ENCODE measurements at regions of chr19 and their contacts with region 1.

Region 1: DNA sequence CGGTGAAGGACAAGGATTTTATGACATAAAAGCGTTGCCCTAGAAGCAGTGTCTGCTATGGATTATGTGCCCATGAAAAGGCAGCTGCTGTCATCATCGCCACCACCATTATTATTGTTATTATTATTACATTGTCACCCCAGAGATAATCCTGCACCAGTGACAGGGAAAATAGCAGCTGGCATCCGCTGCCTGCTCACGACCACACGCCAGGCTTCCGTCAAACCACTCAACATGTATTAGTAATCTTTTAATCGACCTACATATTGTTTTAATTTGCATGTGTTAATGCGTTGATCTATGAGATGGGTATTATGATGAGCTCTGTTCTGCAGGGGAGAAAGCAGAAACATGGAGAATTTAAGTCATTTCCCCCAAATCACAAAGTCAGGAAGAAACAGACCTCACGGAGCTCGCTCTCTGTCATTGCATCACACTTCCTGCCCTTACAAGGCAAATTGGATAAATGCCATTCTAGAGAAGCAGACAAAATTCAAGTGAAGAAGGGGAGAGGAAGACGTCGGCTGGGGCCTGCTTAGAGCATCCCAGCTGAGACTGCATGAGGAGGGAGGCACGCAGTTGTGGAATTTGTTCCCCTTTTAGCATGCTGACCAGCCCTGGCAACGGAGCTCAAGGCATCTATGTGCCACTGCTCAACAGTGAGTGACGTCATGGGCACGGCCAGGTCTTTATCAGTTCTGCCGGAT is at the start of gene FFAR3:
- DNase-seq: peak in 3 of 5 donors; percentile 10 to 24 (median 22)
- H3K4me3 ChIP-seq: no peak within 1 kb of the TSS
- H3K4me3 Mint-ChIP-seq: peak within 1 kb of the TSS in 7 of 8 donors; percentile 19 to 70 (median 58)
- H3K27ac ChIP-seq: no peak within 1 kb of the TSS
- H3K27ac Mint-ChIP-seq: peak within 1 kb of the TSS in 5 of 7 donors; percentile 2 to 75 (median 36)
- H3K4me1 ChIP-seq: peaks cover 15% of the 10 kb centered on the region
- H3K4me1 Mint-ChIP-seq: peaks cover 5 to 9% (median 9%) of the 10 kb centered on the region in 4 donors
- H3K27me3 ChIP-seq: no peaks in the 10 kb centered on the region
- H3K27me3 Mint-ChIP-seq: peaks cover 3 to 9% of the 10 kb centered on the region in 2 donors
- total RNA-seq, gene FFAR3: not detected

Region 2: DNA sequence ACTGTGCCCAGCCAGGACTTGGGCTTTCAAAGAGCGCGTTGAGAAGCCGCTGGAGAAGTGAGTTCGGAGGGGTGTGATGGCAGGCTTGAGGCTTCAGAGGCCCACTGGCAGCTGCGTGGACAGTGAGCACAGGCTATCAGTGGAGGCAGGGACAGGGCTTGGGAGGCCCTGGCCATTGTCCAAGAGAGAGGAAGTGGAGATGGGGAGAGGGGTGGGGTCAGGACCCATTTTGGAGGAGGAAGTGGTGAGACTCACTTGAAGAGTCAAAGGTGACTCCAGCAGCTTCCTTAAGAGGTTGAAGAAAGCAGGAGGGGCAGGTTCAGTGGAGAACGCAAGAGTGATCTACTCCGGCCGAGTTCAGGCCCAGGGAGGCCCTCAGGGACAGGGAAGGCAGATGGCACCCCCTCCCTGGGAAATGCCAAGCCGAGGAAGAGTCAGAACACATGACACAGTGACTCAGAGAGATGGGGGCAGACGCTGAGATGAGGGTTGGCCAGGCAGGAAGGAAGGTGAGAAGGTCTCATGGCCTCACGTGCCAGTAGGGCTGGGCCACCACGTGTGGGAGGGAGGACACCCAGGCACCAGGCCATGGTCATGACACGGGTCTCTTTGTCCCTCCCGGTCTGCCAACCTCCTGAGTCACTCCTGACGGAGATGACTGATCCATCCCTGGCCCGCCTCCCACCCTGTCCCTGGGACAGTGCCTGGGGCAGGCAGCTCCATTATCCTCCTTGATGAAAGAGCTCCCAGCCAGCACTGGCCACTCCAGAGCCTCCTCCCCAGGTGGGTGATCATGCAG is 39.2 kb before region 1 on chr19:
- CTCF ChIA-PET with region 1: no interaction called
- POLR2A ChIA-PET with region 1: no interaction called
- intact Hi-C with region 1: no loop called
- DNase-seq: no peak
- H3K4me3 ChIP-seq: no peak overlapping the region
- H3K4me3 Mint-ChIP-seq: no peak overlapping the region
- H3K27ac ChIP-seq: no peak overlapping the region
- H3K27ac Mint-ChIP-seq: peak overlapping the region in 1 of 7 donors; percentile 32
- H3K4me1 ChIP-seq: peaks cover 6% of the 10 kb centered on the region
- H3K4me1 Mint-ChIP-seq: peaks cover 0 to 12% (median 6%) of the 10 kb centered on the region in 4 donors
- H3K27me3 ChIP-seq: no peaks in the 10 kb centered on the region
- H3K27me3 Mint-ChIP-seq: peaks cover 0 to 2% of the 10 kb centered on the region in 2 donors

Region 3: GRCh38 chr19:35468637-35469036 is 110.6 kb after region 1 on chr19:
- CTCF ChIA-PET with region 1: interaction called, 97 read pairs
- POLR2A ChIA-PET with region 1: interaction called, 20 read pairs
- intact Hi-C with region 1: no loop called
- DNase-seq: peak; percentile 64 to 73 (median 71)
- H3K4me3 ChIP-seq: no peak overlapping the region
- H3K4me3 Mint-ChIP-seq: no peak overlapping the region
- H3K27ac ChIP-seq: no peak overlapping the region
- H3K27ac Mint-ChIP-seq: peak overlapping the region in 1 of 7 donors; percentile 47
- H3K4me1 ChIP-seq: peaks cover 12% of the 10 kb centered on the region
- H3K4me1 Mint-ChIP-seq: peaks cover 7 to 17% (median 16%) of the 10 kb centered on the region in 4 donors
- H3K27me3 ChIP-seq: no peaks in the 10 kb centered on the region
- H3K27me3 Mint-ChIP-seq: peaks cover 0 to 1% of the 10 kb centered on the region in 2 donors

Measured in CD4-positive, alpha-beta memory T cell (primary cell).